Activated CD8-positive, alpha-beta T cell treated with anti-CD3 and anti-CD28 coated beads, Interleukin-2, amount 10 ng/mL, durations not matched to agents 7 days and 5 days (primary cell): ENCODE measurements at regions of chr11 and their contacts with region 1.

Region 1: DNA sequence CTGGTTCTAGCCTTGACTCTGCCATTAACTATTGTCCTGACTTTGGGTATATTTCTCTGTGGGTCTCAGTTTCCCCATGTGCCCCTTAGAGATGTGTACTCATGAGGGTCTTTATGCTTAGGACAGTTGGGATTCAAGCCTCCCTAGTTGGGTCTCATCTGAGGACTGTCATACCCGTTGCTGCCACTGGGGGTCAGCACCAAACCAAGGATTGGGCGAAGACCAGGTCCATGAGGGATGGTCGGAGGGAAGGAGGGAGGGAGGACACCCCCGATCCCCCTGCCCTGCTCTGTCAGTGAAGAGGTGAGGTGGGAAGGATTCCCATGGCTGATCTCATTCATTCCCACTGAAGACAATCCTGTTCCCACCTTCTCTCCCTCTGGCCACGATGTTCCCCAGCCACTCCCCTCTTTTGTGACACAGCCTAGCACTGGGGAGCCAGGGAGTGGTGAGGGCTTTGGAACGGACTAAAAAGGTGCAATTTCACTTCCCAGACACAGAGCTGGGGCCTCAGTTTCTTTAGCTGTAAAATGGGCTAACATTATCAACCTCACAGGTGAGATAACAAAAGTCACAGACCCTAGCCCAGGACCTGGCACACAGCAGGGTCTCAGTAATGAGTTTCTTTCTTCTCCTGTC is 12.4 kb upstream of the KLHL35 start:
- DNase-seq: peak; percentile 78
- ATAC-seq: peak; percentile 80
- H3K4me3 Mint-ChIP-seq: no peak overlapping the region
- H3K27ac Mint-ChIP-seq: no peak overlapping the region
- H3K4me1 Mint-ChIP-seq: no peaks in the 10 kb centered on the region
- H3K27me3 Mint-ChIP-seq: no peaks in the 10 kb centered on the region

Region 2: DNA sequence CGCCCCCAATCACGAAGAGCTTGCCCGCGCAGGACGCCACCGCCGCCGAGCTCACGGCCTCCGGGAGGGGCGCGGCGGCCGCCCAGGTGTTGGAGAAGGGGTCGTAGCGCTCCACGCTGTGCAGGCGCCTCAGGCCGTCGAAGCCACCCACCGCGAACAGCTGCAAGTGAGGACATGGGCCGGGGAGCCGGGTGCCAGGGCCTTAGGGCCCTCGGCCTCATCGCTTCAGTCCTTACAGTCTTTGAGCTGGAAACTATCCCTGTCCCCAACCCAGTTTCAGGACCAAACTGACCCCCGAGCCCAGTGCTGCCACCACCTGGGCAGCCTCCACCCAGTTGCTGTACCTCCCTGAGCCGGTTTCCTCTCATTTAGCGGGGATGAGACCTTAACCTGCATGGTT is 20.0 kb before region 1 on chr11:
- CTCF ChIA-PET with region 1: no interaction called
- POLR2A ChIA-PET with region 1: no interaction called
- DNase-seq: no peak
- ATAC-seq: no peak
- H3K4me3 Mint-ChIP-seq: no peak overlapping the region
- H3K27ac Mint-ChIP-seq: no peak overlapping the region
- H3K4me1 Mint-ChIP-seq: peaks cover 12% of the 10 kb centered on the region
- H3K27me3 Mint-ChIP-seq: peaks cover 16% of the 10 kb centered on the region

Region 3: DNA sequence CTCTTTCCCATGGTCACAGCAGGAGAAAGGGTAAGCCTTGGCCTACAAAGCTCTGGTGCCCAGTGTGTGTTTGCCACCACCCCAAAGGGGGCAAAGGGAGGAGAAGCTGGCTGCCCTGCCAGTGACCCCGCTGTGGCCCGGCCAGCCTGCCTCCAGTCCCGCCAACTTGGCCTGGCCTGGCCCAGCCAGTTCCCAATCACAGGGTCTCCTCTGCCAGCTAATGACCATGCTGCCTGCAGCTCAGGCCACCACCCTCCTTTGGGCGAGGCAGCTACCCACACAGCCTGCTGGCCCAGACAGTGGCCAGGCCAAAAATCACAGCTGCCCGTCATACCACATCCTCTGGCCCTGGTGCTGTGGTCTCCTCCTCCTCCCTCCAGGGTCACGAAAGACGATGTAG is 75.3 kb after region 1 on chr11:
- CTCF ChIA-PET with region 1: interaction called, 237 read pairs
- POLR2A ChIA-PET with region 1: interaction called, 3 read pairs
- DNase-seq: no peak
- ATAC-seq: no peak
- H3K4me3 Mint-ChIP-seq: no peak overlapping the region
- H3K27ac Mint-ChIP-seq: no peak overlapping the region
- H3K4me1 Mint-ChIP-seq: peaks cover 48% of the 10 kb centered on the region
- H3K27me3 Mint-ChIP-seq: peaks cover 15% of the 10 kb centered on the region

Region 4: DNA sequence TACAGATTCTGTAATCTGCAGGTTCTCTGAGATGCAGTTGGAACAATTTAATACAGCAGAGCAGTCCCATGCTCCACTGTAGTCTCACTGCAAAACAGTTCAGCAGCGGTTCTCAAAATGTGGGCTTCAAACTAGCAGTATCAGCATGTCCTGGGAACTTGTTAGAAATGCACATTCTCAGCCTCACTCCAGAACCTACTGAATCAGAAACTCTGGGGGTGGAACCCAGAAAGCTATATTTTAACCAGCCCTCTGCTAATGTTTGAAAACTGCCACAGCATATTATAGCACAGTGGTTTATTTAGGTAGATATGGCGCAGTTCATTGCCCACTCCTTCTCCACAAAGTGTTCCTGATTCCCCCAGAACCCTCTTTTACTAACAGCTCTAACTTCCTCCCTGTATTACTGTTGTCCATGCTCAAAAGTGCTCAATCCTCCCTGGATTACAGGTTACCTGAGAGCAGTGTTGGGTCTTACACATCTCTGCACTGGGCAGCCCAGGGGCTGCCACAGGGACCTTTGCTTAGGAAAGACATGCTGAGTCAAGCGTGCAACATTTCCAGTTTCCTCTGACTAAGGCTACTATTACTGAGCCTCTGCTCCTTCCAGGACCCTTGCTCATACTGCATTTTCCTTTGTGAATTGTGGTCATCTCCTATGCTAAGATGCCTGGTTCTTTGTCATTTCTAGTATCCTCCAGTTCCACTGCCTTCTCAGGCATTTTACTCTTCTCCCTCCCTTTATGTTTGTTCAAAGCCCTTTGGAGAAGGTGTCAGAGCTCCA is 315.5 kb after region 1 on chr11:
- CTCF ChIA-PET with region 1: no interaction called
- POLR2A ChIA-PET with region 1: no interaction called
- DNase-seq: no peak
- ATAC-seq: no peak
- H3K4me3 Mint-ChIP-seq: no peak overlapping the region
- H3K27ac Mint-ChIP-seq: no peak overlapping the region
- H3K4me1 Mint-ChIP-seq: no peaks in the 10 kb centered on the region
- H3K27me3 Mint-ChIP-seq: peaks cover 6% of the 10 kb centered on the region